Activated naive CD4-positive, alpha-beta T cell treated with anti-CD3 and anti-CD28 coated beads for 36 hours (primary cell): ENCODE measurements at regions of chr15 and their contacts with region 1.

Region 1: DNA sequence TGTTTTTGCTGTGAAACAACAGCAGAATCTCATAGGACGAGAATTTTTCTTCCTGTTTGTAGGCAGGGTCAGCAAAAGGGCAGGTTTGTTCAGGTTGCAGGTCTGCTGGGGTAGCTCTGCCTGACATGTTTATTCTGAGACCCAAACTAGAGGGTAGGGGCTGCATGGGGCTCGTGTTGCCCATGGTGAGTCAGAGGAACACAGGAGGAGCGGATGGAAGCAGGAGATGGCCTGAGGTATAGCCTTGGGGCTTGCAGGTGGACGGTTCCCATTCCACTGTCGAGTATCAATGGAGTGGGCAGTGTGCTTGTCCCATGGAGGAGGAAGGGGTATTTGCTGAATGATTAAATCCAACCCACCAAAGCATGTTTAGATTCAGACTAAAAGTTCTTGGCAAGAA is 138.9 kb downstream of the APBA2 start:
- DNase-seq: no peak
- H3K4me3 Mint-ChIP-seq: no peak overlapping the region
- H3K27ac Mint-ChIP-seq: no peak overlapping the region
- H3K4me1 Mint-ChIP-seq: peaks cover 25% of the 10 kb centered on the region
- H3K27me3 Mint-ChIP-seq: no peaks in the 10 kb centered on the region

Region 2: GRCh38 chr15:28994831-28995596 is 29.6 kb before region 1 on chr15:
- CTCF ChIA-PET with region 1: no interaction called
- intact Hi-C with region 1: loop called (anchors 5 kb)
- DNase-seq: no peak
- H3K4me3 Mint-ChIP-seq: no peak overlapping the region
- H3K27ac Mint-ChIP-seq: no peak overlapping the region
- H3K4me1 Mint-ChIP-seq: peaks cover 9% of the 10 kb centered on the region
- H3K27me3 Mint-ChIP-seq: no peaks in the 10 kb centered on the region